ENCODE measurements at regions of chr12 and their contacts with region 1.

Region 1: DNA sequence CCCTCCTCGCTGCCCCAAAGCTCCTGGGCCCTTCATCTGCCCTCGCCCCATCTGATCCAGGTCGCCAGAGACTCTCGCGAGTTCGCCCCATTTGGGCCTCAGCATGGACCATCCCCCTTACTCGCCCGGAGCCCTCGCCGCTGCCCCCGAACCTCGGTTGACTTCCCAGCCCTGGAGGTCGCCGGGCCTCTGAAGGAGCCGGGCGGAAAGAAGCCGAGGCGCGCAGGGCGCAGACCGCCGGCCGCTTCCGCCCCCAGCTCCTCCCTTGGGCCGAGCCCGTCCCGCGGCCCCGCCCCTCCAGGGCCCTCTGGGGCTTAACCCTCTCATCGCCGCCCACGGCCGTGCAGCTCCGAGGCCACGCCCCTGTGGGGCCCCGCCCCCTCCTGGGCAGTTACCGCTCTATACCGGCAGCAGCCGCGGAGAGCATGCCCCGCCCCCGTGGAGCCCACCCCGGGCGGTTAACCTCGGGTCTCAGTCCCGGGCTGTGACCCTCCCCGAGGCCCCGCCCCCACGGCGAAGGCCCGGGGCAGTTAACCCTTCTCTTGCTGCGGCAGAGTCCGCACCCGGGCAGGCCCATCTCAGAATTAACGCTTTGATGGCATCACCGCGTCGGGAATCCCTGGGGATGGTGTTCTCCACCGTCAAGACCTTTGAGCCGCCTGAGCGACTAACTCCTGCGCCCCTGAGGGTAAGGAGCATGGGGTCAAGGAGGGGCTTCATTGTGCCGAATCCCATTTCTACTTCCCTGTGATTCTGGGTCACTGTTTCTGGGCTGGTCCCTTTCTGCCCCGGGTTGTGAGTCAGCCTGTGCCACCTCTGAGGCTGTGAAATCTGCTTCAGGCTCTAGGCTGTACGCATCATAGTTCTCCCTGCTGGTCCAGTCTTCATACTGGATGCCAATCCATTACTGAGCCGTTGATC is at the start of gene SPSB2:
- DNase-seq: peak; percentile 99
- H3K4me3 Mint-ChIP-seq: peak within 1 kb of the TSS; percentile 88
- H3K27ac Mint-ChIP-seq: peak within 1 kb of the TSS; percentile 81
- H3K4me1 Mint-ChIP-seq: peaks cover 45% of the 10 kb centered on the region
- H3K27me3 Mint-ChIP-seq: no peaks in the 10 kb centered on the region
- total RNA-seq, gene SPSB2: 2.6 to 2.8 TPM

Region 2: DNA sequence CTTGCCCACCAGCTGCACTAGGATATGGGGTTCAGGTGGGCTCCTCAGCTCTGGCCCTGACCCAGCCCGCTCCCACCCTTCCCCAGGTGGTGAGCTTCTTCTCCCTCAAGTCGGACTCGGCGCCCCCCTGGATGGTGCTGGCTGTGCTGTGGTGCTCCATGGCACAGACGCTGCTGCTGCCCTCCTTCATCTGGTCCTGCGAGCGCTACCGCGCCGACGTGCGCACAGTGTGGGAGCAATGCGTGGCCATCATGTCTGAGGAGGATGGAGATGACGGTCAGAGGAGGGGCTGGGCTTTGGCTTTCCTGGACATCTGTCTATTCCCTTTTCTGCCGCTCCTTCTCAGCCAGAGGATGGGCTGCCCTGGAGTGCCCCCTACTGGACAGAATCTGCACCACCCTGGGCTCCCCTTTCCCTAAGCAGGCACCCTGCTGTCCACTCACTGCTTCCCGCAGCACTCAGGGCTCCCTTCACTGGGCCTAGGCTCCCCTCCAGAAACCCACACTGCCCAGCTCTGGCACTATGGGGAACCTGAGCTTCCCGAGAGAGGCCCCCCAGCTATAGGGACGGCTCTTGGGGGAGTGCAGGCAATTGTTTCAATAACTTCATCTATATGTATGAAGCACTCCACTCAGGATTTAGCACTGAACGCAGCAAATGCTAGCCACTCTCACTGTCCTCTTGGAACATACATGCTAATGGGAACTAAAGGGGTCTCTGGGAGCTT is 47.8 kb before region 1 on chr12:
- CTCF ChIA-PET with region 1: interaction called, 3 read pairs
- intact Hi-C with region 1: loop called (anchors 2 kb)
- DNase-seq: peak; percentile 92
- H3K4me3 Mint-ChIP-seq: no peak overlapping the region
- H3K27ac Mint-ChIP-seq: no peak overlapping the region
- H3K4me1 Mint-ChIP-seq: peaks cover 28% of the 10 kb centered on the region
- H3K27me3 Mint-ChIP-seq: peaks cover 19% of the 10 kb centered on the region

Region 3: DNA sequence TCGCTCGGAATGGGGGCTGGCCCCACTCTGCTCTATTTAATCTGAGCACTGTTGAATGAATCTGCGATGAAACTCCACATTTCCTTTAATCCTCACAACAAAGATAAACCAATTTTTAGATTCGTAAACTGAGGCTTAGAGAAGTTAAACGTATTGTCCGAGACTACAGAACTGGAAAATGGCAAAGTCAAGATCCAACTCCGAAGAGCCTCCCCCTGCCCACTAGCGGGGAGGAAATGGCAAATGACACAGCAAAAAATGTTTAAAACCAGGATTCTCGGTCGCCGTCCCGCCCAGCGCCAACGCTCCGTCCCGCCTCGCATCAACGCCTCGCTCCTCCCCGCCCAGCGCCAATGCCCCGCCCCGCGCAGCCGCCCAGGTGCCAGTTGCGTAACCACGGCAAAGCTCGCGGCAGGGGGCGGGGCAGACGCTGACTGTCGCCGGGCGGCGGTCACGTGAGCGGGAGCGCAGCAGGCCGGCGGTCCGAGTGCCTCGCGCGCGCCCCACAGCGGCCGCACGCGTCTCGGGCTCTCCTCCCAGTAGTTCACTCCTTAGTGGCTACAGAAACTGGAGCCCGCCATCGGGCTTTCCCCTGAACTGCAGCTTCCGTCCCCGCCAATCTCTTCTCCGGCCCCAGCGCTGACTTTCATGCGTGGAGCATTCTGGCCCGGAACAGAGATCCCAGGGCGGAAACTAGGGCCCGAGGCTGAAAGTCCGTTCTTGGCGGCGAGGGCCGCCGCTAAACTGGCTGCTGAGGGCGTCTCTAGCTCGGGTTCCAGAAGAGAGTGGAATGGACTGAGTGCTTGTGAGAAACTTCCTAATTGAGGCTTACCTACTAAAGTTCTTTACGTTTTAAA is 17.7 kb after region 1 on chr12:
- CTCF ChIA-PET with region 1: interaction called, 33 read pairs
- intact Hi-C with region 1: loop called (anchors 1 kb)
- DNase-seq: peak; percentile 100
- H3K4me3 Mint-ChIP-seq: peak overlapping the region; percentile 90
- H3K27ac Mint-ChIP-seq: peak overlapping the region; percentile 98
- H3K4me1 Mint-ChIP-seq: peaks cover 16% of the 10 kb centered on the region
- H3K27me3 Mint-ChIP-seq: no peaks in the 10 kb centered on the region

Region 4: DNA sequence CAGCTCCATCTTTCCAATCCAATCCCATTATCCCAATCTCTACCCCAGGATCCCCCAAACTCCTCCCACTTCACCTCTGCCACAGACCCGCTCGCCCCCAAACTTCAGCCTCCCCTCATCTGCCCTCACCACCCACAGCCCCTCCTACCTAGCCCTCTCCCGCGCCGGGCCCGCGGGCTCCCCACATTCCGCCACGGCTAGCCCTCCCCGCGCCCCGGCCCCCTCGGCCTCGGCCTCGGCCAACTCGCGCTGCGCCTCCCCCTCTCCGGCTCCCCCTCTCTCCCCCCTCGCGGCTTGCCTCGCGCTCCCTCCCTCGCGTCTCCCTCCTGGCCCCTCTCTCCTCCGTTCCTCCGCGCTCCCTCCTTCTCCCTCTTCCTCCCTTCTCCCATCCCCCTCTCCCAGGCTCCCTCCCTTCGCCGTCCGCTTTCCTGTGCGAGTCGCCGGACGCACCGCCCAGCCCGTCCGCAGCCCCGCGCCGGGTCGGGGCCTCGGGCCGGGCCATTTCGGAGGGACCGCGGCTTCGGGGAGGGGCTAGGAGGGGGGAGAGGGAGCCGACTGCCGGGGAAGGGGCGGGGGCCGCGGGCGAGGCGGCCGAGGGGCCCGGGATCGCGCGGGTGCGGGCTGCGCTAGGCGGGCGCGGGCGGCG is 54.1 kb after region 1 on chr12 and contains the start of gene ATN1:
- CTCF ChIA-PET with region 1: interaction called, 13 read pairs
- intact Hi-C with region 1: loop called (anchors 2 kb)
- DNase-seq: peak; percentile 51
- H3K4me3 Mint-ChIP-seq: peak within 1 kb of the TSS; percentile 75
- H3K27ac Mint-ChIP-seq: peak within 1 kb of the TSS; percentile 81
- H3K4me1 Mint-ChIP-seq: peaks cover 59% of the 10 kb centered on the region
- H3K27me3 Mint-ChIP-seq: no peaks in the 10 kb centered on the region
- total RNA-seq, gene ATN1: 20.1 to 22.2 TPM

Region 5: GRCh38 chr12:6965026-6965661 is 91.8 kb after region 1 on chr12:
- CTCF ChIA-PET with region 1: interaction called, 3 read pairs
- intact Hi-C with region 1: loop called (anchors 1 kb)
- DNase-seq: peak; percentile 95
- H3K4me3 Mint-ChIP-seq: no peak overlapping the region
- H3K27ac Mint-ChIP-seq: peak overlapping the region; percentile 93
- H3K4me1 Mint-ChIP-seq: peaks cover 81% of the 10 kb centered on the region
- H3K27me3 Mint-ChIP-seq: no peaks in the 10 kb centered on the region

Region 6: DNA sequence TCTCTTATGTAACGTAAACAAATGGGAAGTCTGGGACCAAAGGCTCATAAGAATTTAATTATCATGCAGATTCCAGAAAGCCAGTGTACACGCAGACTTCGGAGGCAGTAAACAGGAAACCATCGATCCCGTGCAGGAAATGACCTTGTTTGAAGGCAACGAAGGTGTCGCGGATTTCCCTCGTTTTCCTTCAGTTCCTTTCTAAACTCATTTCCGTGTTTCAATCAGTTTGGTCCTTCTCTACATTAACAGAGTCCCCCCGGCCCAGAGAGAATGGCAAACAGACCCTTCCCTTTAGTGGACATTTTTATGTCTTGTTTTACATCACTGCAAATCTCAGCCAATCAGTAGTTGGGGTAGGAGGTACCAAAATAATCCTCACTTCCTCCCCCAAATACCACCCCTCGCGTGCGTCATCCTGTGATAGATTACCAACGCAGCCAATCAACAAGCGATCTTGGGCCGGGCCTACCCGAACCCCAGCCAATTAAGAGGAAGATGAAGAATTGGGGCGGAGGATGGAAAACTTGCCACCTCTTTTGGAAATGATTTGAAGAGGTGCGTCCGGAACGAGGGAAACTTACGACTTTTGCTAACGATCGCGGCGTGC is 1153.0 kb after region 1 on chr12:
- CTCF ChIA-PET with region 1: no interaction called
- intact Hi-C with region 1: loop called (anchors 5 kb)
- DNase-seq: peak; percentile 99
- H3K4me3 Mint-ChIP-seq: peak overlapping the region; percentile 94
- H3K27ac Mint-ChIP-seq: peak overlapping the region; percentile 100
- H3K4me1 Mint-ChIP-seq: peaks cover 11% of the 10 kb centered on the region
- H3K27me3 Mint-ChIP-seq: no peaks in the 10 kb centered on the region

Measured in activated naive CD4-positive, alpha-beta T cell treated with anti-CD3 and anti-CD28 coated beads for 36 hours (primary cell).